ENCODE measurements at regions of chr4 and their contacts with region 1.

Region 1: GRCh38 chr4:14504162-14504561 is 498.1 kb upstream of the CPEB2 start:
- DNase-seq: no peak
- ATAC-seq: no peak
- H3K4me3 ChIP-seq: no peak overlapping the region
- H3K27ac ChIP-seq: no peak overlapping the region
- H3K4me1 ChIP-seq: no peaks in the 10 kb centered on the region
- H3K27me3 ChIP-seq: no peaks in the 10 kb centered on the region
- CTCF ChIP-seq: no peak

Region 2: GRCh38 chr4:14168919-14169318 is 335.2 kb before region 1 on chr4:
- CTCF ChIA-PET with region 1: no interaction called
- POLR2A ChIA-PET with region 1: interaction called, 15 read pairs
- intact Hi-C with region 1: no loop called
- DNase-seq: peak; percentile 97
- ATAC-seq: peak; percentile 87
- H3K4me3 ChIP-seq: peak overlapping the region; percentile 10; the same call in 1 of the 2 replicates
- H3K27ac ChIP-seq: peak overlapping the region; percentile 99
- H3K4me1 ChIP-seq: peaks cover 27% of the 10 kb centered on the region
- H3K27me3 ChIP-seq: no peaks in the 10 kb centered on the region
- CTCF ChIP-seq: no peak

Region 3: GRCh38 chr4:14520171-14520570 is 16.0 kb after region 1 on chr4:
- CTCF ChIA-PET with region 1: no interaction called
- POLR2A ChIA-PET with region 1: no interaction called
- intact Hi-C with region 1: no loop called
- DNase-seq: peak; percentile 12
- ATAC-seq: no peak
- H3K4me3 ChIP-seq: no peak overlapping the region
- H3K27ac ChIP-seq: no peak overlapping the region
- H3K4me1 ChIP-seq: no peaks in the 10 kb centered on the region
- H3K27me3 ChIP-seq: no peaks in the 10 kb centered on the region
- CTCF ChIP-seq: no peak

Region 4: DNA sequence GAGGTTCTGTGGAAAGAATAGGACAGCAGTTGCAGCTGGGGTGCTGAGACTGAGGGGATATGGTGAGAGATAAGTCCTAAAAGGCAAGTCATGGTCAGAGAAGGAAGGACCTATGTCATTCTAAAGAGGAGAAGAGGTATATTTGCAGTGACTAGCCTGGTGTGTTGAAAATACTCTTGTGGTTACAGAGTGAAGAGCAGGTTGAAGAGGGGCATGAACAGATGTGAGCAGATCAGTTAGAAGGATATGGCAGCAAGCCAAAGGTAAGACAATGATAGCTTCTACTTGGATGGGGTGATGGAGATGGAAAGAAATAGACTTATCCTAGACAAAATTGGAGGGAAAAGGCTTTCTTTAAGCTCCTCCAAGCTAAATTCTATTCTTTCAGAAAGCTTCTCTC is 28.3 kb after region 1 on chr4:
- CTCF ChIA-PET with region 1: interaction called, 10 read pairs
- POLR2A ChIA-PET with region 1: no interaction called
- intact Hi-C with region 1: no loop called
- DNase-seq: no peak
- ATAC-seq: no peak
- H3K4me3 ChIP-seq: no peak overlapping the region
- H3K27ac ChIP-seq: no peak overlapping the region
- H3K4me1 ChIP-seq: peaks cover 7% of the 10 kb centered on the region
- H3K27me3 ChIP-seq: no peaks in the 10 kb centered on the region
- CTCF ChIP-seq: no peak

Region 5: GRCh38 chr4:14607578-14607977 is 103.4 kb after region 1 on chr4:
- CTCF ChIA-PET with region 1: no interaction called
- POLR2A ChIA-PET with region 1: no interaction called
- intact Hi-C with region 1: no loop called
- DNase-seq: peak; percentile 58
- ATAC-seq: no peak
- H3K4me3 ChIP-seq: no peak overlapping the region
- H3K27ac ChIP-seq: peak overlapping the region; percentile 47
- H3K4me1 ChIP-seq: peaks cover 11% of the 10 kb centered on the region
- H3K27me3 ChIP-seq: no peaks in the 10 kb centered on the region
- CTCF ChIP-seq: no peak

Measured in PC-3 (cell line).